Left ventricle myocardium superior (tissue), 1 donor: ENCODE measurements at regions of chr12 and their contacts with region 1.

Region 1: GRCh38 chr12:89352492-89353187 is at the start of gene DUSP6:
- DNase-seq: peak; percentile 93
- ATAC-seq: peak; percentile 74
- total RNA-seq, gene DUSP6: 23.0 TPM

Region 2: DNA sequence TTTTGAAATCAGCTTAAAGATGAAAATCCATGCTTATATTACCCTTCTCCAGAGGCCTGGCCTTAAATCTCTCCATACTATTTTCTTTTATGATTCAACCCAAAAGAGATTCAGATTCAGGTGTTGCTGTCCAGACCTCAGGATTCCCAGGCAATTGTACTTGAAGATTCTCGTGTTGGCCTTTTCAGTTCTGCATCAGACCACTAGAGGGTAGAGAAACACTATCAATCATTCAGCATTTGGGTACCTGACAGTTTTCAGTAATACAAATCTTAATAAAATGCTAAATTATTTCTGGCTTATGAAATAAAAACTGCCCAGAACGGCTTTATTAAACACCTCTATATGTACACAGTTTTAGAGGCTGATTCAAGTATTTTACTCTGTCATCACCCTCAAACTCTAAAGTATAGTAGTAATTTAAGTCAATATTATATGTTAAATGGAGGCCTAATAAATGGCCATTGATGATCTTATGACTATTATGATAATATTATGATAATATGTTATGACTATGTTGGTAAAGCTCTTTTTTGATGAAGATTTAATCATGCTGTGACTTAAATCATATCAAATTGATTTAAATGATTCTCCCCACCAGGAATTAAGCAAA is 301.5 kb before region 1 on chr12:
- intact Hi-C with region 1: loop called (anchors 10 kb)
- DNase-seq: no peak
- ATAC-seq: peak; percentile 72

Region 3: DNA sequence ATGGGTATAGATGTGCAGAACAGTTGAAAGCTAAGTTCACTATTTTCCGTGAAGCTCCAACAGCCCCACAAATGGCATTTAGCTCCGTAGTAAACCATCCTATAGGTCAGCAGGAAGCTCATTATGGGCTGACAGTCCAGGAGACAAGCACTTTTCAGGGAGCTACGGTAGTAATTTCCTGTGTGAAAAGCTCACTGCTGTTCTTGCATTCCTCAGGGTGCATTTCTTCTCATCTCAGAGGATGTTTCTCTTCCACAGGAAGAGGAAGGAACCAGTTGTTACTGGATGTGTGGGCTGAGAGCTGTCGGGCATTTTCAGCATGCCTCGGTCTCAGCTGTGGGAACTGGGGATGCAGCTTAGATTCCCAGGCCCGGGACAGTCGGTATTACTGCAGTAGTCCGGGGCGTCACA is 99.2 kb after region 1 on chr12:
- intact Hi-C with region 1: loop called (anchors 10 kb)
- DNase-seq: peak; percentile 50
- ATAC-seq: peak; percentile 73

Region 4: GRCh38 chr12:89481213-89481914 is 128.7 kb after region 1 on chr12:
- intact Hi-C with region 1: no loop called
- DNase-seq: no peak
- ATAC-seq: peak; percentile 20